ENCODE measurements at regions of chr18 and their contacts with region 1.

Region 1: GRCh38 chr18:63439334-63439733 is 17.1 kb upstream of the VPS4B start:
- DNase-seq: peak in 1 of 2 donors; percentile 80
- ATAC-seq: peak; percentile 69 to 82 (median 78)
- H3K4me3 ChIP-seq: no peak overlapping the region
- H3K4me3 Mint-ChIP-seq: no peak overlapping the region
- H3K27ac ChIP-seq: no peak overlapping the region
- H3K27ac Mint-ChIP-seq: no peak overlapping the region
- H3K4me1 ChIP-seq: no peaks in the 10 kb centered on the region
- H3K4me1 Mint-ChIP-seq: no peaks in the 10 kb centered on the region
- H3K27me3 ChIP-seq: no peaks in the 10 kb centered on the region
- H3K27me3 Mint-ChIP-seq: peaks cover 12 to 13% of the 10 kb centered on the region in 2 donors
- CTCF ChIP-seq: peak; percentile 95

Region 2: DNA sequence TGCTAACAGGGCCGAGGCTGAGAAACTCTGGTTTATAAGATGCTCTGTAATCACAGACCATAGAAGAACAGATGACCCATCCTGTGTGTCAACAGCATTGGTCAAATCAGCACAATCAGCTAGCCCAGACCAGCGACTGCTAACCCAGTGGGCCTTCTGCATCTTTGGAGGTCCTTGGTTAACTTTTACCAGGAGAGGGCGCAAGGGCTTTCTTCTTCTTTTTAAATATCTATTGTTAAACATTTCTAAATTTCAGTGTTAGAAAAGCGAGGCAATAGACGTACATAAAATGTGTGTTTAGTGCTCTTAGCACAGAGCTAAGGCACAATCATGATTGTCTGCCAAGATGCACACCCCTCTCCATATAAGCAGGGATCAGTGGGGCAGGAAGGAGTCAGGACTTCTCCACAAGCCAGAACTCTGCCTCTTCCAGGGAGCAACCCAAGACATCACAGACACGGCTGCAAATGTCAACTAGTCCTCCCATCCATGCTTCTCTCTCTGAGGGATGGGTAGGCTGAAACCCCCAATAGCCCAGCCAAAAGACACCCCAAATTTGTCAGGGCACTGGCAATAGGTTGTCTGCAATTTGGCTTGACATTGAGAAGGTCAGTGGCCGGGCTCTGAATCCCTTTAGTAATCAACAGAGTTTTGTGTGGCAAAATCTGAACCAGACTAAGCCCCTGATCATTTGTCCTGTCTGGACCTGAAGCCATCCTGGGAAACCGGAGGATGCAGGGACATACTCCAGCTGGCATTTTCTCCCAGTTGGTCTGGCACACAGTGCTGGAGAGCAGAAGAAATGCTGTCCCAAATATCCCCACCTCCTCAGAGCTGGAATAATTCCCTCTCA is 308.0 kb before region 1 on chr18:
- intact Hi-C with region 1: loop called (anchors 1 kb)
- DNase-seq: peak; percentile 33 to 81
- ATAC-seq: peak; percentile 62 to 90 (median 71)
- H3K4me3 ChIP-seq: no peak overlapping the region
- H3K4me3 Mint-ChIP-seq: no peak overlapping the region
- H3K27ac ChIP-seq: peak overlapping the region; percentile 4
- H3K27ac Mint-ChIP-seq: peak overlapping the region in 1 of 2 donors; percentile 60
- H3K4me1 ChIP-seq: peaks cover 6% of the 10 kb centered on the region
- H3K4me1 Mint-ChIP-seq: peaks cover 18 to 32% of the 10 kb centered on the region in 2 donors
- H3K27me3 ChIP-seq: no peaks in the 10 kb centered on the region
- H3K27me3 Mint-ChIP-seq: no peaks in the 10 kb centered on the region
- CTCF ChIP-seq: peak; percentile 79

Region 3: DNA sequence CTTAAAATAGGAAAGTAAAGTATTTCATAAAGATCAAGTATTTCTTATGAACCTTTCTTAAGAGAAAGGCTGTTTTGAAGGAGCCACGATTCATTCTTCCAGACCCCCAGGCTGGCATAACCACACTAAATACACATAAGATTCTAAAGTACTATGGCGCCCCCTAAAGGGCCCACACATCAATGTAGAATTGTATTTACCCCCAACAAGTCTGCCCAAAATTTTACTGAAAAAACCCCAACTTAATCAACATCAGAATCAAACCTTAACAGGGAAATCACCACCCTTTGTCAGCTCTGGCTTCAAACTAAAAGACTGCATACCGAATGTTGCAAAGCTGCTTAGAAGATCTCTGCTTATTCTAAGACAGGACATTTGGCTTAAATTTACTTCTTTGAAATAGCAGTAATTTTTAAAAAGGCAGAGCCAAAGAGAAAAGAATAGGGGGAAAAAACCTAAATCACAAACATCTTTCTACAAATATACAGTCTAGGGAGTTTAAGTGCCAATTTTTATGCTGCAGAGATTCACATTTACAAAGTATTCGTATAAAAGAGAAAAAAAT is 99.3 kb before region 1 on chr18:
- intact Hi-C with region 1: loop called (anchors 1 kb)
- DNase-seq: peak in 1 of 2 donors; percentile 78
- ATAC-seq: peak; percentile 61 to 72 (median 69)
- H3K4me3 ChIP-seq: no peak overlapping the region
- H3K4me3 Mint-ChIP-seq: no peak overlapping the region
- H3K27ac ChIP-seq: no peak overlapping the region
- H3K27ac Mint-ChIP-seq: no peak overlapping the region
- H3K4me1 ChIP-seq: no peaks in the 10 kb centered on the region
- H3K4me1 Mint-ChIP-seq: peaks cover 0 to 1% of the 10 kb centered on the region in 2 donors
- H3K27me3 ChIP-seq: no peaks in the 10 kb centered on the region
- H3K27me3 Mint-ChIP-seq: no peaks in the 10 kb centered on the region
- CTCF ChIP-seq: peak; percentile 64

Measured in natural killer cell (primary cell).